ENCODE measurements at regions of chr15 and their contacts with region 1.

Region 1: DNA sequence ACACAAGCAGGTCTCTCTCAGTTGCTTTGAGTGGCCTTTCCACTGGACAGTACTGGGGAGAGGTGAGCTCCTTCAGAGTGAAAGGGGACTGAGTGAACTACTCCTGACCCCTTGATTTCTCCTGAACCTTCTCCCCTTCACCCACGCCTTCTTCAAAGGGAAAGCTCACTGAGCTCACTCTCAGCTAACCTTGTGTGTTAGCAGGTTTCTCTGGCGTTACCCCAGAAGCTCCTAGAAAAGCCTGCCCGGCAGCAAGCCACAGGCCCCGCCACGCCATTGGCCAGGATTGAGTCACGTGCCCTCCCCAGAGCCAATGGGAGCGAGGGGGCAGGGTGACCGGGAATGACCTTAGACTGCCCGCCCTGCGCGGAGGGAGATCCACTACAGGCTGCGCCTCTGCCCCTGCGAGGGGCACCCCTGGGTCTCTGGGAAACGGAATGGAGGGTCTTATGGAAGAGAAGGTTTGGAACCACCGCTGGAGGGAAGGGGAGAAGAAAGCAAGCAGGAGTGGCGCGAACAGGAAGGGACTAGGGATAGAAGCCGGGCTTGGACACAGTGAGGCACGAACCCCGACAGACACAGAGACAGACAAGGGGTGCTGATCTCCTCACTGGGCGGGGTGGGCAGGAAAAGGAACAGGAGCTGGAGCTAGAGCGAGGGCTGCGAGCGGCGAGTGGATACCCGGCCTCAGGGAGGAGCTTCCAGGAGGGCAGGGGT is 17.4 kb upstream of the CLK3 start:
- DNase-seq: peak; percentile 67 to 91 (median 82)
- ATAC-seq: peak; percentile 97
- H3K4me3 ChIP-seq: peak overlapping the region; percentile 65
- H3K4me3 Mint-ChIP-seq: peak overlapping the region; percentile 99
- H3K27ac ChIP-seq: peak overlapping the region; percentile 66 to 76
- H3K27ac Mint-ChIP-seq: peak overlapping the region; percentile 94
- H3K4me1 ChIP-seq: peaks cover 19% of the 10 kb centered on the region
- H3K4me1 Mint-ChIP-seq: peaks cover 20% of the 10 kb centered on the region
- H3K27me3 ChIP-seq: no peaks in the 10 kb centered on the region
- H3K27me3 Mint-ChIP-seq: no peaks in the 10 kb centered on the region
- CTCF ChIP-seq: no peak

Region 2: GRCh38 chr15:74460871-74461846 is 137.1 kb before region 1 on chr15 and contains the start of gene UBL7:
- CTCF ChIA-PET with region 1: no interaction called
- POLR2A ChIA-PET with region 1: no interaction called
- intact Hi-C with region 1: loop called in 1 of 2 experiments (anchors 1 kb)
- DNase-seq: peak; percentile 91 to 97 (median 96)
- ATAC-seq: peak; percentile 98
- H3K4me3 ChIP-seq: peak within 1 kb of the TSS; percentile 92
- H3K4me3 Mint-ChIP-seq: peak within 1 kb of the TSS; percentile 97
- H3K27ac ChIP-seq: peak within 1 kb of the TSS; percentile 61 to 62
- H3K27ac Mint-ChIP-seq: peak within 1 kb of the TSS; percentile 84
- H3K4me1 ChIP-seq: peaks cover 19% of the 10 kb centered on the region
- H3K4me1 Mint-ChIP-seq: peaks cover 53% of the 10 kb centered on the region
- H3K27me3 ChIP-seq: no peaks in the 10 kb centered on the region
- H3K27me3 Mint-ChIP-seq: no peaks in the 10 kb centered on the region
- CTCF ChIP-seq: peak; percentile 15
- total RNA-seq, gene UBL7: 14.3 to 17.1 TPM

Measured in CD4-positive, alpha-beta T cell (primary cell).